ENCODE measurements at regions of chr2 and their contacts with region 1.

Region 1: DNA sequence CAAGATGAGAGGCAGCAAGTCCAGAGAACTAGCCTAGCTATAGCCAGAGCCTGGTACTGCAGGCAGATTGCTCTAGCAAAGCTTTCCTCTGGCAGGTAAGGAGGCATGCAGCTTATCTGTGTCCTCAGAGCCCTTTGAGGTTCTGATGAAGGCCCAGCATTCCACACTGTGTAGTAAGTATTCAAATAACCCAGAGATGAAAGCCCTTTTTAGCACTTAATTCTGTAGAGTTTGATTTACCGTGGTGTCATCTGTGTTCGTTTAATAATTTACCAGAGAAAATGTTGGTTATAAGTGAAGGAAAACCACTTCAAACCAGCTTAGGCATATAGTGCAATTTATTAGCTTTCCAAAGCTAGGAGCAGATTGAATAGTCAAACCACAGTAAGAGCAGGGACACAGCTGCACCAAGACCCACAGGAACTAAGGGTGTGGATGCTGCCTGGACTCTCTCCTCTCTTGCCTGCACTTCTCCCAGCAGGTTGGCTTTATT is 226.6 kb downstream of the BABAM2 start:
- DNase-seq: no peak
- H3K4me3 ChIP-seq: no peak overlapping the region
- CTCF ChIP-seq: no peak
- POLR2A ChIP-seq: no peak

Region 2: DNA sequence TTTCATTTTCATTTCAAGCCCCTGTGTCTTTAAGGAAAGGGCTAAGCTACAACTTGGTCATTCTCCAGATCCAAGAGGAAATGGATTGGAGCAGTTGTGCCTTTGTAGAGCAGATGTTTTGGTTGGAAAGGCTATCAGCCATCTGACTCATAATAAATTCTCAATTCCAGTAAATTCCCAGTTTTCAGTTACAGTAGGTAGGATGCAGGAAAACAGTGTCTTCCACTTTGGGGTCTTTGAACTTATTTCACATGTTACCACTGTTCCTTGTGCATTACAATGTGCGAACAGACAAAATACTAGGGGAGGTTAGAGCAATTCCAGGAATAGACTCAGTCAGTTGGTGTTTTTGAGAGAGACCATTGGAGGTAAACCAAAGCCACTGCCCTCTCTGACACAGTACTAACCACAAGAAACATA is 14.7 kb before region 1 on chr2:
- intact Hi-C with region 1: loop called (anchors 1 kb)
- DNase-seq: no peak
- H3K4me3 ChIP-seq: no peak overlapping the region
- CTCF ChIP-seq: no peak
- POLR2A ChIP-seq: no peak